Activated naive CD4-positive, alpha-beta T cell treated with anti-CD3 and anti-CD28 coated beads, Interleukin-2, amount 10 ng/mL, durations not matched to agents 7 days and 5 days (primary cell): ENCODE measurements at regions of chr11 and their contacts with region 1.

Region 1: GRCh38 chr11:10405855-10406592 is 49.0 kb upstream of the AMPD3 start:
- DNase-seq: peak; percentile 53
- H3K4me3 Mint-ChIP-seq: no peak overlapping the region
- H3K27ac Mint-ChIP-seq: no peak overlapping the region
- H3K4me1 Mint-ChIP-seq: peaks cover 34% of the 10 kb centered on the region
- H3K27me3 Mint-ChIP-seq: peaks cover 4% of the 10 kb centered on the region

Region 2: GRCh38 chr11:10474551-10474950 is 68.5 kb after region 1 on chr11:
- CTCF ChIA-PET with region 1: no interaction called
- DNase-seq: no peak
- H3K4me3 Mint-ChIP-seq: no peak overlapping the region
- H3K27ac Mint-ChIP-seq: no peak overlapping the region
- H3K4me1 Mint-ChIP-seq: peaks cover 6% of the 10 kb centered on the region
- H3K27me3 Mint-ChIP-seq: no peaks in the 10 kb centered on the region

Region 3: GRCh38 chr11:10653926-10654810 is 248.1 kb after region 1 on chr11:
- CTCF ChIA-PET with region 1: interaction called, 23 read pairs
- DNase-seq: peak; percentile 49
- H3K4me3 Mint-ChIP-seq: no peak overlapping the region
- H3K27ac Mint-ChIP-seq: no peak overlapping the region
- H3K4me1 Mint-ChIP-seq: peaks cover 14% of the 10 kb centered on the region
- H3K27me3 Mint-ChIP-seq: peaks cover 4% of the 10 kb centered on the region

Region 4: GRCh38 chr11:10730151-10730550 is 324.1 kb after region 1 on chr11:
- CTCF ChIA-PET with region 1: interaction called, 12 read pairs
- DNase-seq: no peak
- H3K4me3 Mint-ChIP-seq: no peak overlapping the region
- H3K27ac Mint-ChIP-seq: no peak overlapping the region
- H3K4me1 Mint-ChIP-seq: peaks cover 15% of the 10 kb centered on the region
- H3K27me3 Mint-ChIP-seq: peaks cover 63% of the 10 kb centered on the region

Region 5: DNA sequence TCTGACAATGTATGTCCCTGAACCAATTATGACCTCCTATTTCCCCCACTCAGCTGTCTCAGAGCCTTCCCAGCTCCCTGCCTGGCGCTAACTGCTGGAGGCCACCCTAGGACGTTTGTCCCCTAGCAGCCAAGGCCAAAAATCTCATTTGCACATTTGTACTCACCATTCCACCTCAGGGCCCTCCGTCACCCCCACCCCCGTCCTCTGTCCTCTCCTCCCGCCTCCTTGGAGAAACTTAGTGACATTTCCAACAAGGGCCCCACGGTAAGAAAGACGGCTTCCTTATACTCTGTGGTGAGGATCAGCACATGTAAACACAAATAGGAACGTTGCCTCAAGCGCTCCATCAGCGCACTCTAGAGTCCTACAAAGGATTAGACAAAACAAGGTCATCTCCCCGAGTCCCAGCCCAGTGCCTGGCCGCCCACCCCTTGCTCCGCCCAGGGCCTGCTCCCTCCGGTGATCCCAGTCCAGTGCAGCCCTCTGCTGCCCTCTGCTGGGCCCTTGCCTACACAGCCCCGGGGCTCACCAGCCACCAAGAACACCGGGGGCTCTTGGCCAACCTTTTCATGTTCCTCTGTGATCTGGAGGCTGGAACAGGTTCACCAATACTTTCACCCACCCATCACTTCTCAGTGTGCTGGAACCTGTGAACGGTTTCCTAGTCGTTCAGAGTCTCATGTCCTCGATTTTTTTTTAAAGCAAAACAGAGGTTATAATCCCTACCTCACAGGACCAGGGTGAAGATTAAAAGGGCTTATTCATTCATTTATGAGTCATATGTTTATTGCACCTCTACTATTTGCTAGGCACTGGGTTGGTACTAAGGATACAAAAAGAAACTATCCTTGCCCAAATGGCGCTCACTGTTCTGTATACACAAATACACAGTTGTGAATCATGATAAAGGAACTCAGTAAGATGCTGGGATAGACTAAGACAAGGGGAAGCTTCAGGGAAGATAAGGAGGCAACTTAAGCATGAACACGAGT is 329.8 kb after region 1 on chr11:
- CTCF ChIA-PET with region 1: interaction called, 12 read pairs
- DNase-seq: peak; percentile 89
- H3K4me3 Mint-ChIP-seq: no peak overlapping the region
- H3K27ac Mint-ChIP-seq: no peak overlapping the region
- H3K4me1 Mint-ChIP-seq: peaks cover 11% of the 10 kb centered on the region
- H3K27me3 Mint-ChIP-seq: peaks cover 33% of the 10 kb centered on the region

Region 6: DNA sequence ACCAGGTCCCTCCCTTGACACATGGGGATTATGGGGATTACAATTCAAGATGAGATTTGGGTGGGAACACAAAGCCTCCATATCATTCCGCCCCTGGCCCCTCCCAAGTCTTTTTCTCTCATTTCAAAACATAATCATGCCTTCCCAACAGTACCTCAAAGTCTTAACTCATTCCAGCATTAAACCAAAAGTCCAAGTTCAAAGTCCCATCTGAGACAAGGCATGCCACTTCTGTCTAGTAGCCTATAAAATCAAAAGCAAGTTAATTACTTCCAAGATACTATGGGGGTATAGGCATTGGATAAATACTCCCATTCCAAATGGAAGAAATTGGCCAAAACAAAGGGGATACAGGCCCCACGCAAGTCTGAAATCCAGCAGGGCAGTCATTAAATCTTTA is 422.4 kb after region 1 on chr11:
- CTCF ChIA-PET with region 1: no interaction called
- DNase-seq: no peak
- H3K4me3 Mint-ChIP-seq: no peak overlapping the region
- H3K27ac Mint-ChIP-seq: no peak overlapping the region
- H3K4me1 Mint-ChIP-seq: peaks cover 8% of the 10 kb centered on the region
- H3K27me3 Mint-ChIP-seq: no peaks in the 10 kb centered on the region